B cell (primary cell): ENCODE measurements at regions of chr6 and their contacts with region 1.

Region 1: GRCh38 chr6:42963855-42964605 is 3.5 kb downstream of the GNMT start:
- DNase-seq: no peak
- ATAC-seq: peak; percentile 42
- H3K4me3 ChIP-seq: no peak overlapping the region
- H3K4me3 Mint-ChIP-seq: no peak overlapping the region
- H3K27ac ChIP-seq: no peak overlapping the region
- H3K27ac Mint-ChIP-seq: no peak overlapping the region
- H3K4me1 ChIP-seq: peaks cover 9 to 16% of the 10 kb centered on the region in 2 donors
- H3K4me1 Mint-ChIP-seq: peaks cover 13% of the 10 kb centered on the region
- H3K27me3 ChIP-seq: peaks cover 0 to 12% (median 3%) of the 10 kb centered on the region in 4 experiments
- H3K27me3 Mint-ChIP-seq: no peaks in the 10 kb centered on the region
- CTCF ChIP-seq: no peak

Region 2: DNA sequence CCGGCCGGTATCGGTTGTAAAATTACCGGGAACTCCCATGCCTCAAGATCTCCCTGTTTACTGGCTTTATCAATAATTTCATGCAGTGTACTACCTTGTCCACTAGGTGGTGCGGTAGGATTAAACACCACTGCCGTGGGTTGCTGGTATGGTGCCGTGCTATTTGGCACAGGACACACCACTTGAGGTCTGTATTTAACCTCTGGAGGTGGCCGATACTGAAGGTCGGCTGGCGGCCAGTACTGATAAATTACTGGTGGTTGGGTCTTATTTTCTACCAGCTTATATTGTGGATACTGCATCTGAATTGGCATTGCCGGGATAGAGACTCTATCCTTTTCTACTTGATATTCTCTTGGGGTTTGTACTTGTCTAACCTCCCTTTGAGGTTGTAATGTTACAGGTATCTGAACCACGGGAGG is 62.5 kb before region 1 on chr6:
- CTCF ChIA-PET with region 1: interaction called, 3 read pairs
- POLR2A ChIA-PET with region 1: no interaction called
- intact Hi-C with region 1: loop called (anchors 5 kb)
- DNase-seq: peak; percentile 88
- ATAC-seq: peak; percentile 99
- H3K4me3 ChIP-seq: no peak overlapping the region
- H3K4me3 Mint-ChIP-seq: no peak overlapping the region
- H3K27ac ChIP-seq: no peak overlapping the region
- H3K27ac Mint-ChIP-seq: no peak overlapping the region
- H3K4me1 ChIP-seq: peaks cover 5 to 8% of the 10 kb centered on the region in 2 donors
- H3K4me1 Mint-ChIP-seq: peaks cover 10% of the 10 kb centered on the region
- H3K27me3 ChIP-seq: no peaks in the 10 kb centered on the region
- H3K27me3 Mint-ChIP-seq: no peaks in the 10 kb centered on the region
- CTCF ChIP-seq: peak; percentile 93

Region 3: GRCh38 chr6:42978839-42979522 is 15.0 kb after region 1 on chr6 and contains the start of gene PEX6:
- CTCF ChIA-PET with region 1: interaction called, 3 read pairs
- POLR2A ChIA-PET with region 1: interaction called, 8 read pairs
- intact Hi-C with region 1: loop called (anchors 2 kb)
- DNase-seq: peak; percentile 95
- ATAC-seq: peak; percentile 94
- H3K4me3 ChIP-seq: peak within 1 kb of the TSS; percentile 71 to 88 (median 80)
- H3K4me3 Mint-ChIP-seq: peak within 1 kb of the TSS; percentile 98
- H3K27ac ChIP-seq: peak within 1 kb of the TSS; percentile 73 to 85
- H3K27ac Mint-ChIP-seq: peak within 1 kb of the TSS; percentile 98
- H3K4me1 ChIP-seq: peaks cover 19 to 30% of the 10 kb centered on the region in 2 donors
- H3K4me1 Mint-ChIP-seq: peaks cover 38% of the 10 kb centered on the region
- H3K27me3 ChIP-seq: no peaks in the 10 kb centered on the region
- H3K27me3 Mint-ChIP-seq: no peaks in the 10 kb centered on the region
- CTCF ChIP-seq: no peak
- total RNA-seq, gene PEX6: 16.6 and 17.1 TPM in 2 replicates